Panc1 (cell line): ENCODE measurements at regions of chr5 and their contacts with region 1.

Region 1: GRCh38 chr5:132281855-132282614 is 12.2 kb upstream of the SLC22A4 start:
- DNase-seq: no peak
- ATAC-seq: no peak
- H3K4me3 ChIP-seq: no peak overlapping the region
- H3K27ac ChIP-seq: no peak overlapping the region
- H3K4me1 ChIP-seq: no peaks in the 10 kb centered on the region
- H3K27me3 ChIP-seq: no peaks in the 10 kb centered on the region
- CTCF ChIP-seq: peak; percentile 25

Region 2: DNA sequence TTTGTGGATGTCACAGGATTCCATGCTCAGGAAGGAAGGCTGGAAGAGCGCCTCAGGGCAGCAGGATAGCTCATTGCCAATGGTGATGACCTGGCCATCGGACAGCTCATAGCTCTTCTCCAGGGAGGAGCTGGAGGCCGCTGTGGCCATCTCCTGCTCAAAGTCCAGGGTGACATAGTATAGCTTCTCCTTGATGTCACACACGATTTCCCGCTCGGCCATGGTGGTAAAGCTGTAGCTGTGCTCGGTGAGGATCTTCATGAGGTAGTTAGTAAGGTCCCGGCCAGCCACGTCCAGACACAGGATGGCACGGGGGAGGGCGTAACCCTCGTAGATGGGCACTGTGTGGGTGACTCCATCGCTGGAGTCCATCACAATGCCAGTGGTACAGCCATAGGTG is 622.7 kb before region 1 on chr5:
- CTCF ChIA-PET with region 1: no interaction called
- POLR2A ChIA-PET with region 1: interaction called, 15 read pairs
- in situ Hi-C with region 1: no loop called
- intact Hi-C with region 1: no loop called
- DNase-seq: no peak
- ATAC-seq: no peak
- H3K4me3 ChIP-seq: no peak overlapping the region
- H3K27ac ChIP-seq: no peak overlapping the region
- H3K4me1 ChIP-seq: no peaks in the 10 kb centered on the region
- H3K27me3 ChIP-seq: no peaks in the 10 kb centered on the region
- CTCF ChIP-seq: no peak

Region 3: DNA sequence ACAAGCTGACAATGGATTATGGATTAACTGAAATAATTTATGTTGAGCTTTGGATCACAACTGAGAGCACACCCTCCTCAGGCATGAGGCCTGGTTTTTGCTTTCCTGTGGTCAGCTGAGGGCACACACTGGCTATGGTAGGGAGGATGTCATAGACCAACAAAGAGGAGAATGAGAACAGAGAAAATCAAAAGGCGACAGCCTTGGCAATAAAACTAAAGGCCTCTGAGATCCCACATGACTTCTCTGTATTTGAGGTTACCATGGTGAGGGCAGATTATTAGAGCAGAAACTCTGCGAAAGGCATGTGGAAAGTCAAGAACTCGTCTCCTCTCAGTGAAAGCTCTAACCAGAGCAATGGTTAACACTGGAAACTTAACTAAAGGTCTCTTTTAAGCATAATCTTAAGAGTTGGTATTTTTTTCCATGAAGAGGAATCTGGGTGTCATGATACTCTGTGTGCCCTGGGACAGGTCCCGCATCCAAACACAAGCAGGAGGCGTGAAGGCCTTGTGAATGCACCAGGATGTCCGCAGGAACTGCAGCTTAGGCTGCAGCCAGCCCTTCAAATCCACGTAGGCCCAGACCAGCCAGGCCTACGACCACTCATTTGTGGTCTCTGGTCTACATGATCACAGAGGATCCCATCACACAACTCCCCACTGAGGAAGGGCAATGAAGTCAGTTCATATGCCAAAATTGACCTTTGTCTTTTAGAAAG is 324.2 kb before region 1 on chr5:
- CTCF ChIA-PET with region 1: no interaction called
- POLR2A ChIA-PET with region 1: no interaction called
- in situ Hi-C with region 1: no loop called
- intact Hi-C with region 1: no loop called
- DNase-seq: no peak
- ATAC-seq: no peak
- H3K4me3 ChIP-seq: no peak overlapping the region
- H3K27ac ChIP-seq: no peak overlapping the region
- H3K4me1 ChIP-seq: no peaks in the 10 kb centered on the region
- H3K27me3 ChIP-seq: no peaks in the 10 kb centered on the region
- CTCF ChIP-seq: no peak

Region 4: DNA sequence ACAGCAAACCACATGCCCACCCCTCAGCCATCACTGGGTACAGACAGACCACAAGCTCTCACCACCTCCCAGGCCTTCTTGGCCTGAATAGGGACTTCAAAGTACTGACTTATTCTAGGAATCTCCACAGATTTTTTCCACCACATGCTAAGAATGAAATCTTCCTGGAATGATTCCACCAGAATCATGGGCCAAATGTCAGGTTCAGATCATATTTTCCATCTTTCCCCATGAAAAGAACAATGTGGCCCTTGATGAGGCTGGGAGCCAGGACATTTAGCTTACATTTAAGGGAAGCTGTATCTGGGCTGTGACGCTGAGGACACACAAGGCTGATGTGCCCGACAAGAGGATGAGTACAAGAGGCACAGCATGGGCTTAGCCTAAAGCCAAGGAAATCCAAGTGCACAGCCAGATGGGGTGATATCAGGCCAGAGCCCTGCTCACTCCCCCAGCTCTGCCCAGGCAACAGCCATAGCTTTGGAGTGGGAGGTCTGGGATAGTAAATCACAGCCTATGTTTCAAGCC is 298.7 kb before region 1 on chr5:
- CTCF ChIA-PET with region 1: no interaction called
- POLR2A ChIA-PET with region 1: no interaction called
- in situ Hi-C with region 1: no loop called
- intact Hi-C with region 1: no loop called
- DNase-seq: no peak
- ATAC-seq: no peak
- H3K4me3 ChIP-seq: no peak overlapping the region
- H3K27ac ChIP-seq: no peak overlapping the region
- H3K4me1 ChIP-seq: no peaks in the 10 kb centered on the region
- H3K27me3 ChIP-seq: no peaks in the 10 kb centered on the region
- CTCF ChIP-seq: no peak